ENCODE measurements at regions of chr7 and their contacts with region 1.

Region 1: GRCh38 chr7:99364961-99365817 is 9.3 kb upstream of the ARPC1B start:
- DNase-seq: no peak
- H3K4me3 ChIP-seq: no peak overlapping the region
- H3K27ac ChIP-seq: no peak overlapping the region
- H3K4me1 ChIP-seq: peaks cover 0 to 3% (median under 1%) of the 10 kb centered on the region in 4 donors
- H3K27me3 ChIP-seq: no peaks in the 10 kb centered on the region
- CTCF ChIP-seq: peak; percentile 46 to 62 (median 46)
- EP300 ChIP-seq: no peak
- POLR2A ChIP-seq: no peak

Region 2: GRCh38 chr7:99408379-99409191 is 43.4 kb after region 1 on chr7 and contains the starts of genes BUD31 and PDAP1:
- intact Hi-C with region 1: loop called (anchors 5 kb)
- DNase-seq: peak; percentile 98
- H3K4me3 ChIP-seq: peak within 1 kb of the TSS; percentile 93 to 100 (median 97)
- H3K27ac ChIP-seq: peak within 1 kb of the TSS; percentile 95 to 98 (median 95)
- H3K4me1 ChIP-seq: peaks cover 46 to 62% (median 55%) of the 10 kb centered on the region in 4 donors
- H3K27me3 ChIP-seq: no peaks in the 10 kb centered on the region
- CTCF ChIP-seq: peak in 2 of 3 experiments; percentile 12 to 27
- EP300 ChIP-seq: no peak
- POLR2A ChIP-seq: peak; percentile 70
- total RNA-seq, gene BUD31: 61.8 to 82.0 (median 66.2) TPM
- total RNA-seq, gene PDAP1: 85.9 to 116 (median 99.9) TPM

Region 3: GRCh38 chr7:99478464-99479440 is 113.6 kb after region 1 on chr7:
- intact Hi-C with region 1: no loop called
- DNase-seq: no peak
- H3K4me3 ChIP-seq: no peak overlapping the region
- H3K27ac ChIP-seq: peak overlapping the region in 2 of 4 donors; percentile 0 to 24
- H3K4me1 ChIP-seq: peaks cover 11 to 21% (median 15%) of the 10 kb centered on the region in 4 donors
- H3K27me3 ChIP-seq: no peaks in the 10 kb centered on the region
- CTCF ChIP-seq: no peak
- EP300 ChIP-seq: no peak
- POLR2A ChIP-seq: no peak

Measured in esophagus muscularis mucosa (tissue), 4 donors.